ENCODE measurements at regions of chr1 and their contacts with region 1.

Region 1: GRCh38 chr1:119895986-119896702 is at the start of gene ADAM30:
- DNase-seq: no peak
- H3K4me3 ChIP-seq: no peak within 1 kb of the TSS
- H3K27me3 ChIP-seq: no peaks in the 10 kb centered on the region; the same call in 1 of the 2 replicates
- CTCF ChIP-seq: no peak; the same call in 1 of the 2 replicates
- polyA plus RNA-seq, gene ADAM30: not detected in 2 replicates

Region 2: DNA sequence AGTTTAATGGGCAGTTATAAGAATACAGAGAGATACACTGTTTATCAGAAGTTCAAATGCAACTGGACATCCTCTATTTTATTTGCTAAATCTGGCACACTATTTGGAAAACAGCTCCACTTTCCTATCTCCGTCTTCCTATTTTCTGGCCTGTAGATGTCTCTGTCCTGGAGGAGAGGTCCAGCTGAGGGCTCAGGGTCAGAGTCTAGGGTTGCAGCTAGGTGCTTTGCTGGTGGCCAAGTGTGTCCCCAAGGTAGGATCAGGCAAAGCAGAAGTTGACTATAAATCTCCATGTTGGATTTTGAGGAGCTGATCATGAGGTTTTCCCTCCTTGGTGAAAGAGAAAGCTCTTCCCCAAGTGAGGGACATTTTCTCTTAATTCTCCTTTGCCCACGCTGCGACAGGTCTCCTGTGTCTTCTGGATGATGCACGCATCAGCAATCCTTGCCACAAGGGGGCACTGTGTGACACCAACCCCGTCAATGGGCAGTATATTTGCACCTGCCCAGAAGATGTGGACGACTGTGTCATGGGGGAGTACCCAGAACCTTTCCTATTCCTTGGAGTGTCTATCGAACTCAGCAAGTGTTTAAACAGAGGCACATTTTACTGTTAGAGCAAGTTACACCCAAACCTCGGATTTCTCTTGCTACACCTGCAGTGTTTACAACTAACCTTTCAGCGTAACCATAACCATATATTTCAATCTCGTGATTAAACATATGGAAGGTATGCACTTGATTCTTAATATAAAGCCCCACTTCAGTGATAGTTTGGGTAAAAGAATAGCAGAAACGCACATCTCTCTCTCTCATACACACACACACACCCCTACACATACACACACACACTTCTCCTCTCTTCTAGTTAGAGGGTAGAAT is 10.0 kb before region 1 on chr1:
- CTCF ChIA-PET with region 1: interaction called, 34 read pairs
- POLR2A ChIA-PET with region 1: no interaction called
- DNase-seq: no peak
- H3K4me3 ChIP-seq: no peak overlapping the region
- H3K27me3 ChIP-seq: peaks cover 2% of the 10 kb centered on the region; the same call in 1 of the 2 replicates
- CTCF ChIP-seq: peak; percentile 78